Left cardiac atrium (tissue), 4 donors: ENCODE measurements at regions of chr11 and their contacts with region 1.

Region 1: DNA sequence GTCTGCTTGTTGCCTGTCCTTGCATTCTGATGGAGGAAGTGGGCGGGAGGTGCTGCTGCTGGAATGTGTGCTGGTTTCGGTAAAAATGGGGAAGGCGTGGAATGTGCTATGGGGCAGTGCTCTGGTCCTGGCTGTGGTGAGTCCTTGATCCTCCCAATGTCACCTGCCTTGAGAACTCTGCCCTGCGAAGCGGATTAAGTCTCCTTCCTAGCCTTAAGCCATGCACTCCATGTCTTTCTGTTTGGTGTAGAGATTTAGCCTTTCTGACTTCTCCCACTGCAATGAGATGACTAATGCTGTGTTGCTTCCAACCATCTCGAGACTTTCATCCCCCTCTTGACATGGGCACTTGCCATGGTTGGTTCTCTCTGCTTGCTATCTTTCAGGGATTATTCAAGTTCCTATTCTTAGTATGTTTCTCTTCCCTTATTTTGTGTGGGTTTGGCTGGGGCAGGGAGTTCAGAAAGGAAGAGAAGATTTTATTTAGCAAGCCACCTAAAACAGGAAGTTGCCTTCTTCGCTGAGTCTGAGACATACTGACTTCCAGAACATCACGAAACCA is 687.9 kb downstream of the NTM start:
- DNase-seq: no peak
- ATAC-seq: peak; percentile 54 to 88

Region 2: DNA sequence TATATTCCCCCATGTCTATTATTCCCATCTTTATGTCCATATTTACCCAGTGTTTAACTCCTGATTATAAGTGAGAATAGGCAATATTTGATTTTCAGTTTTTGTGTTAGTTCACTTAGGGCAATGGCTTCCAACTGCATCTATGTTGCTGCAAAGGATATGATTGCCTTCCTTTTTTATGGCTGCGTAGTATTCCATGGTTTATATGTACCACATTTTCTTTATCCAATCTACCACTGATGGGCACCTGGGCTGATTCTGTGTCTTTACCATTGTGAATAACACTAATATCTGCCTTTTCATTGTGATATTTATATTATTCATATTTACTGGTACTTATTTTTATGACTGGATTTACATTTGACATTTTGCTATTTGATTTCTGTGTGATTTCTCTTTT is 38.3 kb before region 1 on chr11:
- intact Hi-C with region 1: loop called in 1 of 2 experiments (anchors 1 kb)
- DNase-seq: no peak
- ATAC-seq: no peak